Naive thymus-derived CD4-positive, alpha-beta T cell (primary cell): ENCODE measurements at regions of chr1 and their contacts with region 1.

Region 1: DNA sequence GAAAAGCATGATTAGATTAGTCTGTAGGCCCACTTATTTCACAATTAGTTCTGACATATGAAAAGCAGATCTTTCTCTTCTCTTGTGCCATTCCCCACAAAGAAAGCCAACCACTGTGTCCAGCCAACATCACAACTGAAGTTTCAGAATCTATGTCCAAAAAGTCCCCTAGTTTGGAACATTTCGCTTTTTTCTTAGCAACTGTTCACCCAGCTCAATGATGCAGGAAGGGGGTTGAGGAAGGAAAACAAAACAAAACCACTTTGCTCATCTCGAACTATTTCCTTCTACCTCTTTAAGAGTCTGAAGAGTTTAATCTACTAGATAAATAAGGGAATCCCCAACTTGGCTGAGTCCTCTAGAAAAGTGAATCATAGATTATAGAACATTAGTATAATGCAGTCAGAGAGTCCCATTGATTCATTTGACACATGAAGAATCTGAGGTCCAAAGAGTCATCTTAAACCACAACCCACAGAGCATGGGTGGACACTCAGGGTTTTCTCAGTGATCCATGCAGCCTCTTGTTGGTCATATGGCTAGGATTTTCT is 159.3 kb upstream of the SGIP1 start:
- DNase-seq: peak in 7 of 9 donors; percentile 27 to 49 (median 40)
- ATAC-seq: peak; percentile 83
- H3K4me3 ChIP-seq: no peak overlapping the region
- H3K4me3 Mint-ChIP-seq: peak overlapping the region in 9 of 10 donors; percentile 46 to 83 (median 67)
- H3K27ac ChIP-seq: peak overlapping the region; percentile 62
- H3K27ac Mint-ChIP-seq: peak overlapping the region; percentile 88 to 96 (median 92)
- H3K4me1 ChIP-seq: peaks cover 51 to 53% of the 10 kb centered on the region in 2 donors
- H3K4me1 Mint-ChIP-seq: peaks cover 52 to 74% (median 65%) of the 10 kb centered on the region in 7 donors
- H3K27me3 ChIP-seq: no peaks in the 10 kb centered on the region
- H3K27me3 Mint-ChIP-seq: no peaks in the 10 kb centered on the region

Region 2: GRCh38 chr1:65830306-65830705 is 544.3 kb before region 1 on chr1:
- CTCF ChIA-PET with region 1: no interaction called
- POLR2A ChIA-PET with region 1: no interaction called
- intact Hi-C with region 1: no loop called
- DNase-seq: no peak
- ATAC-seq: no peak
- H3K4me3 ChIP-seq: no peak overlapping the region
- H3K4me3 Mint-ChIP-seq: peak overlapping the region in 1 of 10 donors; percentile 18
- H3K27ac ChIP-seq: no peak overlapping the region
- H3K27ac Mint-ChIP-seq: peak overlapping the region in 1 of 9 donors; percentile 10
- H3K4me1 ChIP-seq: no peaks in the 10 kb centered on the region
- H3K4me1 Mint-ChIP-seq: peaks cover 0 to 14% (median 0%) of the 10 kb centered on the region in 7 donors
- H3K27me3 ChIP-seq: no peaks in the 10 kb centered on the region
- H3K27me3 Mint-ChIP-seq: peaks cover 11 to 44% (median 20%) of the 10 kb centered on the region in 5 donors

Region 3: DNA sequence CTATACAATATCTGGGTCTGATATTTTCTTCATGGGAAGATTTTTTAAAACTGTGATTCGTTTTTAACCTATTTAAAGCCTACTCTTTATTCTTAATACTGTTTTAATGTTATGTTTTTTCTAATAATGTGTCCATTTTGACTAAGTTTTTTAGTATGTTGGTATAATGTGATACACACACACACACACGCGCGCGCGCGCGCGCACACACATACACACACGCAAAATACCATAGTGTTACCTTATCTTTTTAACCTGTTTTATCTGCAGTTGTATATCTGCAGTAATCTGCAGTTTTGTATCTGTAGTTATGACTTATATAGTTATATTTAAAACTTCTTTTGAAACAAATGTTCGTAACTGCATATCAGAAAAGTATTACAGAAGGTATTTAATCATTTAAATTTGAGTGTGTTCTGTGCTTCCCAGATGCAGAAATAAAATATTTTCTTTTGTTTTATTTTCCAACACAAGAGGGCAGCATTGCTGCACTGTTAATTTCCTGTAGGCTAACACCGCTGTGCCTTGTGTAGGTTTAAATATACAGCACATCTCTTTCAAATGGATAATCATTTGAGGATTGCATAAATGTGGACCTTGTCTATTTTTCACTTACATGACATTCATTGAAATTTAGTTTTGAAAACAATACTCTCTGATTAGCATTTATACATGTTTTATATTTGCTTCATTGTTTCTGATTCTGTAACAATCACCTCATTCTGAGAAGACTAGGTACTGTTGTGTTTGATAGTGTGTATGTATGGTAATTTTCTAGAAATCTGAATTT is 415.9 kb before region 1 on chr1:
- CTCF ChIA-PET with region 1: no interaction called
- POLR2A ChIA-PET with region 1: no interaction called
- intact Hi-C with region 1: loop called (anchors 5 to 10 kb)
- DNase-seq: peak in 7 of 9 donors; percentile 23 to 75 (median 64)
- ATAC-seq: peak; percentile 80
- H3K4me3 ChIP-seq: no peak overlapping the region
- H3K4me3 Mint-ChIP-seq: no peak overlapping the region
- H3K27ac ChIP-seq: no peak overlapping the region
- H3K27ac Mint-ChIP-seq: no peak overlapping the region
- H3K4me1 ChIP-seq: no peaks in the 10 kb centered on the region
- H3K4me1 Mint-ChIP-seq: peaks cover 0 to 12% (median 0%) of the 10 kb centered on the region in 7 donors
- H3K27me3 ChIP-seq: no peaks in the 10 kb centered on the region
- H3K27me3 Mint-ChIP-seq: peaks cover 0 to 7% (median 3%) of the 10 kb centered on the region in 5 donors

Region 4: GRCh38 chr1:66090859-66091457 is 283.7 kb before region 1 on chr1:
- CTCF ChIA-PET with region 1: no interaction called
- POLR2A ChIA-PET with region 1: no interaction called
- intact Hi-C with region 1: no loop called
- DNase-seq: peak in 6 of 9 donors; percentile 10 to 49 (median 26)
- ATAC-seq: peak; percentile 54
- H3K4me3 ChIP-seq: no peak overlapping the region
- H3K4me3 Mint-ChIP-seq: no peak overlapping the region
- H3K27ac ChIP-seq: no peak overlapping the region
- H3K27ac Mint-ChIP-seq: no peak overlapping the region
- H3K4me1 ChIP-seq: no peaks in the 10 kb centered on the region
- H3K4me1 Mint-ChIP-seq: peaks cover 0 to 7% (median 4%) of the 10 kb centered on the region in 7 donors
- H3K27me3 ChIP-seq: no peaks in the 10 kb centered on the region
- H3K27me3 Mint-ChIP-seq: peaks cover 0 to 12% (median 10%) of the 10 kb centered on the region in 5 donors

Region 5: DNA sequence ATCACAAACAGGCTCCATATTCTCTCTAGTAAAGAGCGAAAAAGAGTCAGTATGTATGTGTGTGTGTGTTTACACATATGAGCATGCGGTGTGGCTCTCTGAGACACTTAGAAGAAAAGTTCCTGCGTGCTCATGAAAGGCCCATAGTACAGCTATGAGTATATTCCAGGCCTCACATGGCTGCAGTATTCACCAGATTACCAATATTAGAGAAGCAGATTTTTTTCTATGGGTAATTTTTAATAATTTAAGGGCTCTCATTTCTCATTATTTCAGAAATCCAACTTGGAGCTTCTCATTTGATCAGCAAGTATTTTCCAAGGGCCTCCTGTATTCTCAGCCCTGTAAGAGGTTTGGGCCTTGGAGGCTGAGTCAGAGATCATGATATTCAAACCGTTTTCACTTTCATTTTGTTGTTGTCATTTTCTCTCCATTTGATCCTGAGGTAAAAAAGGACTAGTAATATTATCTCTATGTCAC is 73.6 kb before region 1 on chr1:
- CTCF ChIA-PET with region 1: no interaction called
- POLR2A ChIA-PET with region 1: no interaction called
- intact Hi-C with region 1: loop called (anchors 1 kb)
- DNase-seq: peak in 7 of 9 donors; percentile 32 to 62 (median 45)
- ATAC-seq: peak; percentile 80
- H3K4me3 ChIP-seq: peak overlapping the region; percentile 12
- H3K4me3 Mint-ChIP-seq: peak overlapping the region; percentile 68 to 92 (median 85)
- H3K27ac ChIP-seq: peak overlapping the region; percentile 5
- H3K27ac Mint-ChIP-seq: peak overlapping the region; percentile 82 to 98 (median 91)
- H3K4me1 ChIP-seq: peaks cover 24 to 29% of the 10 kb centered on the region in 2 donors
- H3K4me1 Mint-ChIP-seq: peaks cover 12 to 46% (median 30%) of the 10 kb centered on the region in 7 donors
- H3K27me3 ChIP-seq: no peaks in the 10 kb centered on the region
- H3K27me3 Mint-ChIP-seq: peaks cover 0 to 3% (median 0%) of the 10 kb centered on the region in 5 donors

Region 6: GRCh38 chr1:66360285-66360724 is 14.3 kb before region 1 on chr1:
- CTCF ChIA-PET with region 1: no interaction called
- POLR2A ChIA-PET with region 1: interaction called, 4 read pairs
- intact Hi-C with region 1: loop called in 1 of 2 experiments (anchors 1 kb)
- DNase-seq: no peak
- ATAC-seq: no peak
- H3K4me3 ChIP-seq: no peak overlapping the region
- H3K4me3 Mint-ChIP-seq: no peak overlapping the region
- H3K27ac ChIP-seq: no peak overlapping the region
- H3K27ac Mint-ChIP-seq: peak overlapping the region in 3 of 9 donors; percentile 45 to 72 (median 58)
- H3K4me1 ChIP-seq: peaks cover 40 to 51% of the 10 kb centered on the region in 2 donors
- H3K4me1 Mint-ChIP-seq: peaks cover 40 to 80% (median 65%) of the 10 kb centered on the region in 7 donors
- H3K27me3 ChIP-seq: no peaks in the 10 kb centered on the region
- H3K27me3 Mint-ChIP-seq: no peaks in the 10 kb centered on the region

Region 7: DNA sequence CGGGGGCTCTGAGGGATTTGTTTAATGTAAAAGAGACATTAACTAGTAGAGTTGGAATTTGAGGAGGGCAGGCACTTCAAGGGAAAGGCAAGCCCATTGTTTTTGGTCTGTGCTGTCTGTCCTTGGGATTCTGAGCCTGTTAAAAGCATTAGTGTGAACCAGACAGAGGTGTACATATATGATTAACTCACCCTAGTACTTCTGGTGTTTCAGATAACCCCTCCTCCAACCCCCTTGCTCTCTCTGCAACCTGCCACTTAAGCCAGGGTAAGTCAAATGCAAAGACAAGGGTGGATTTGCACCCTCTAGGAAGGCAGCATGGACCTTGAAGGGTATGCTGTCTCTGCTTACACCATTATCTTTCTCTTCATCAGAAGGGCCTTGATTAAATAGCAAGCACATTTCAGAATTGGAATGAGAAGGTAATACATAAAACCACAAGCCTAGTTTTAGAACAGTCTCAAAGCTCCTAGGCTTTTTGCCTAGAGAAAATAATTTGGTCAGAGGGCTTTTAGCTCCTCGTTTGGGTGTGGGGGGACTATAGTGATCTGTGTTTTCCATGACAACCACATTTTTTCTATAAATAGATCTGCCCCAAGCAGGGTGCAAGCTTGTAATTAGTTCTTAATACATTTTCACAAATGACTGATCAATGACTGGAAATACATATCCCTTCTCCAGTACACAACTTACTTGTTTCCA is 38.7 kb after region 1 on chr1:
- CTCF ChIA-PET with region 1: no interaction called
- POLR2A ChIA-PET with region 1: no interaction called
- intact Hi-C with region 1: loop called in 1 of 2 experiments (anchors 5 kb)
- DNase-seq: no peak
- ATAC-seq: no peak
- H3K4me3 ChIP-seq: no peak overlapping the region
- H3K4me3 Mint-ChIP-seq: no peak overlapping the region
- H3K27ac ChIP-seq: no peak overlapping the region
- H3K27ac Mint-ChIP-seq: peak overlapping the region in 1 of 9 donors; percentile 15
- H3K4me1 ChIP-seq: no peaks in the 10 kb centered on the region
- H3K4me1 Mint-ChIP-seq: peaks cover 7 to 29% (median 21%) of the 10 kb centered on the region in 7 donors
- H3K27me3 ChIP-seq: no peaks in the 10 kb centered on the region
- H3K27me3 Mint-ChIP-seq: no peaks in the 10 kb centered on the region

Region 8: GRCh38 chr1:66607458-66607857 is 232.8 kb after region 1 on chr1:
- CTCF ChIA-PET with region 1: no interaction called
- POLR2A ChIA-PET with region 1: no interaction called
- intact Hi-C with region 1: no loop called
- DNase-seq: no peak
- ATAC-seq: no peak
- H3K4me3 ChIP-seq: no peak overlapping the region
- H3K4me3 Mint-ChIP-seq: no peak overlapping the region
- H3K27ac ChIP-seq: no peak overlapping the region
- H3K27ac Mint-ChIP-seq: no peak overlapping the region
- H3K4me1 ChIP-seq: no peaks in the 10 kb centered on the region
- H3K4me1 Mint-ChIP-seq: no peaks in the 10 kb centered on the region
- H3K27me3 ChIP-seq: no peaks in the 10 kb centered on the region
- H3K27me3 Mint-ChIP-seq: peaks cover 10 to 29% (median 18%) of the 10 kb centered on the region in 5 donors